ENCODE measurements at regions of chr18 and their contacts with region 1.

Region 1: DNA sequence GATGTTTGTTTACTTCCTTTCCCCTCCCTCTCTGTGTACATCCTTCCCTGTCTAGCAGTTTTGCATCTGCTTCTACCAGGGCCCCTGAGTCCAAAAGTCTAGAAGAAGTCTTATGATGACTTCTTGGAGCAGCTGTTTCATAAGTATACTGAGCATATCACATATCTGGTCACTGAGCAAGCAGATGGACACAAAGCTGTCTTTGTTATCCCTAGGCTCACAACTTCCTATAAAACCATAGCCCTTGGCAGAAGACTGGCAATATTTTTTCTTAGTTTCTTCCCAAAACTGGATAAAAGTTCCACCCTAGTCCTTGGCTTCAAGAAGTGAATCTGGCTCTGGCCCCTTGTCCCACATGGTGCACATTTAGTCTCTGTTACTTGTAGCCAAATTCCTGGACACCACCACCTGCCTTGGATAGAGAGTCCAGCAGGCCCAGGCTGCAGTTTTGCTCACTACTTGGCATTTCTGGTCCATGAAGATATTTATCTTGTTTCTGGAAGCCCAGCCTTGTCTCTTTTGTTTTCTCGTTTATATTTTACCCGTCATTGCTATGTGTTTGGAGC is 22.5 kb downstream of the THOC1 start:
- DNase-seq: no peak
- H3K4me3 ChIP-seq: no peak overlapping the region
- H3K27ac ChIP-seq: no peak overlapping the region
- H3K4me1 ChIP-seq: no peaks in the 10 kb centered on the region
- CTCF ChIP-seq: no peak

Region 2: DNA sequence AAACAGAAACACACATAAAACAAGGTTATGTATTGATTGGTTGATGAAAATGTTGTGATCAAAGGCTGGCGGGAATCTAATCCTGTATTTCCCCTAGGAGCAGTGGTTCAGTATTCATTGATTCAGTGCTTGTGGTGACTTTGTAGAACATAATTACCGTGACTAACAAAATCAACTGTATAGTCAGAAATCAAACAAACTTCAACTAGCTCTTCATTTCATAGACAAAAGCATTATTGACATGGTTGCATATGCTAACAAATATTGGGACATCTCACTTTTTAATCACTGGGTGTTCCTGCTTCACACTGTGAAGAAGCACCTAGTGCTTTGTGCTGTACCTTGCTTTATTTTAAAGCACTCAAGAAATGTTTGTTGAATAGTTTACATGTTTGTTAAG is 45.6 kb before region 1 on chr18:
- CTCF ChIA-PET with region 1: no interaction called
- POLR2A ChIA-PET with region 1: no interaction called
- intact Hi-C with region 1: loop called (anchors 5 kb)
- DNase-seq: no peak
- H3K4me3 ChIP-seq: no peak overlapping the region
- H3K27ac ChIP-seq: no peak overlapping the region
- H3K4me1 ChIP-seq: no peaks in the 10 kb centered on the region
- CTCF ChIP-seq: no peak